Activated B cell treated with CpG ODN at 0.5 μM for 24 hours (primary cell): ENCODE measurements at regions of chr6 and their contacts with region 1.

Region 1: GRCh38 chr6:28393911-28394662 is 5.5 kb downstream of the ZSCAN12 start:
- DNase-seq: no peak
- ATAC-seq: no peak
- H3K4me3 Mint-ChIP-seq: no peak overlapping the region
- H3K27ac Mint-ChIP-seq: no peak overlapping the region
- H3K4me1 Mint-ChIP-seq: peaks cover 39% of the 10 kb centered on the region
- H3K27me3 Mint-ChIP-seq: no peaks in the 10 kb centered on the region
- CTCF ChIP-seq: no peak

Region 2: GRCh38 chr6:28589234-28589956 is 195.3 kb after region 1 on chr6:
- CTCF ChIA-PET with region 1: no interaction called
- POLR2A ChIA-PET with region 1: no interaction called
- intact Hi-C with region 1: loop called (anchors 2 kb)
- DNase-seq: no peak
- ATAC-seq: no peak
- H3K4me3 Mint-ChIP-seq: no peak overlapping the region
- H3K27ac Mint-ChIP-seq: no peak overlapping the region
- H3K4me1 Mint-ChIP-seq: peaks cover 22% of the 10 kb centered on the region
- H3K27me3 Mint-ChIP-seq: peaks cover 75% of the 10 kb centered on the region
- CTCF ChIP-seq: no peak